ENCODE measurements at regions of chr16 and their contacts with region 1.

Region 1: DNA sequence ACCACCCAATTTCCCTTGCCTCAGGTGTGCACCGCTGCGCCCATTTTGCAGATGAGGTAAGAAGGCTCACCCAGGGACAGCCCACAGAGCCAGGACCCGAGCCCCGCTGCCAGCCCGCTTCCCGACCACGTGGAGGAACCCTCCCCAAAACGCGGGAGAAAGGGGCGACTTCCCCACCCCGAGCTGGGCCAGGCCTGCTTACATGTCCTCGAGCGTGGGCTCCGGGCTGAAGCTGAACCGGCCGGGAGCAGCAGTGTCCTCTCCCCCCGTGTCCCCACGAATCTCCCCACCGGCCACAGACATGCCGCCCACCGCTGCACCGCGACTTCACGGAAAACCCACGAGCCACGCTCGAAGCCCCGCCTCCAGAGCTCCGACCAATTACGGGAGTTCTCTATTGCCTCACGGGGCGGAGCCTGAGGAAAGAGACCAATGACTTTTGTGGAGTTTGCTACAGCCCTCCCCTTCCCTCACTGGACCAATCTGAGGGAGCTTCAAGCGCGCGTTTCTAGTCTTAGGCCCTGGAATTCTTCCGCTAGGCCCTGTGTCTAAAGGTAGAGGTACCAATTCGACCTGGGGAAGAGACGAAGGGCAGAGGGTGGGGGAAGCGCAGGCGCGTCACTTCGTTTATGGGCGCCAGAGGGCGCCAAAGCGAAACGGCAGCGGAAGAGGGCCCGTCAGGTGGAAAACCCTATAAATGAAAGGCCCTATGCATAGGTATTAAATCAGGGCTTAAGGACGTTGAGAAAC is at the start of gene DCTPP1:
- DNase-seq: peak; percentile 98

Region 2: DNA sequence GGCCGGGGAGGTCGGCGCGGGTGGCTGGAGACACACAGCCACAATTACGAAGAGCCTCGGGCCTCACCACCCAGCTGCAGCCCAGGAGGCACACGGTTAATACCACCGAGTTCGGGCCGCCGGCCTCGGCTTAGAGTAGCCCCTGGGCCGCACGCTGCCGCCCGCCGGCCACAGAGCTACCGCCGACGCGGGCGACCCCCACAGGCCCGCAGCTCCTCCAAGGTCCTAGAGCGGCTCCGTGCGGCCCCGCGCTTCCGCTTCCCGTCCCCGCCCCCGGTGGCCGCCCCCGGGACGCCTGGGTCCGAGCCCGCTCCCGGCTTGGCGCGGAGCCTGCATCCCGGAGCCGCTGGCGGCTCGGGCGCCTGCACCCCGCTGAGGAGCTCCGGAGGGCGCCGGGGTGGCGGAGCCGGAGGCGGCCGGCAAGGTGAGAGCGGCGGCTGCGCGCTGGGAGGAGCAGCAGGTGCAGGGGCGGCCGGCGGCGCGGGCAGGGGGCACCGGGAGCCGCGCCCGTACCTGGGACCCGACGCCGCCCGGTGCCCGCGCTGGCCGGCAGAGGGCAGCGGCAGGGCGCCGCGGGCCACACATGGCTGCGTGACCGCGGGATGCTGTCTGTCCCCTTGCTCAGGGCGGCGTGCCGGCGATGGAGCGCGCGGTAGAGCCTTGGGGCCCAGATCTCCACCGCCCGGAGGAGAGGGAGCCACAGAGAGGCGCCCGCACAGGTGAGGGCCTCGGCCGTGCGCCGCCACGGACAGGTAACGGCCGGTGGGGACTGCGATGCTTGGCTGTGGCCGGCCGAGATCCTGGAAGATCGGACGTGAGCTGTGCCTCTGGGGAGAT is 34.5 kb before region 1 on chr16 and contains the start of gene ZNF48:
- CTCF ChIA-PET with region 1: interaction called, 5 read pairs
- POLR2A ChIA-PET with region 1: interaction called, 16 read pairs
- DNase-seq: peak; percentile 89

Region 3: GRCh38 chr16:30445408-30446202 is 15.8 kb after region 1 on chr16 and contains the start of gene SEPHS2:
- CTCF ChIA-PET with region 1: interaction called, 19 read pairs
- POLR2A ChIA-PET with region 1: interaction called, 50 read pairs
- DNase-seq: peak; percentile 98

Region 4: GRCh38 chr16:30557957-30558788 is 128.3 kb after region 1 on chr16 and contains the start of gene ZNF764:
- CTCF ChIA-PET with region 1: interaction called, 5 read pairs
- POLR2A ChIA-PET with region 1: interaction called, 18 read pairs
- DNase-seq: peak; percentile 98

Region 5: GRCh38 chr16:30615358-30616091 is 185.7 kb after region 1 on chr16:
- CTCF ChIA-PET with region 1: interaction called, 24 read pairs
- POLR2A ChIA-PET with region 1: interaction called, 16 read pairs
- DNase-seq: peak; percentile 83

Measured in HEK293T (cell line).